ENCODE measurements at regions of chr1 and their contacts with region 1.

Region 1: DNA sequence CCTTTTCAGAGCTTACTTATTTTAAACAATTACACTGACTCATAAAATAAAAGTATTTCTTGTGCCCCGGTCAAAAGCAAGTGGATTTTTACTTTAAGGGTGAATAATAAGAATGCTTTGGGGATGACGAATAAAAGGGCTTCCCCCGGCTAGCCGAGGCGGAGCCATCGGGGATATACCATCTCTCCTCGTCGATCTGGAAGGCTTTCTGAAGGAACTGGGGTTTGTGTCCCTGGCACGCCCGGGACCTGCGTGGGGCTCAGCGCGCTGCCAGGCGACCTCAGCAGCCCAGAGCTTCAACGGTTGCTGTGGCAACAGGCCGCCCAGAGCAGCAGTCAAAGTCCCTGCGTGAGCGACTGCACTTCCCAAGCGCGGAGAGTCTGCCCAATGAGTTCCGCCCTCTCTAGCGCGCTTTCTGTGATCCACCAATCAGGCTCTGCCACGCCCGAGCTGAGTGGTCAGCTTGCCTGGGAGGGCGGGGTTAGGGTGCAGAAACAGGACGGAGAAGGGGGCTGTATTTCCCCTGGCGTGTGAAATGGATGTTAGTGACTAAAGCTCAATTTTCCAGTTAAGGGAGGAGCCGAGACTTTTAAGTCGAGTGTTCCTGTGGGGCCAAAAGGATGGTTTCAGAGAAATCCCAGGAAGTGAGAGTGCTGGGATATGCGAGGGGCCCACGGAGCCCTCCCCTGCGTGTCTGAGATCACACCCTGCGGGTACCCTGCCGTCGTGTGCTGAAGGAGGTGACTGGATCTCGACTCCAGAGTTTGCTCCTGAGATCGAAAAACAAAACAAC is 33.0 kb upstream of the MGST3 start:
- DNase-seq: peak; percentile 99
- ATAC-seq: peak; percentile 99
- H3K4me3 ChIP-seq: peak overlapping the region; percentile 47 to 86
- H3K27ac ChIP-seq: peak overlapping the region; percentile 18 to 79
- H3K4me1 ChIP-seq: peaks cover 0 to 5% of the 10 kb centered on the region in 2 donors
- H3K27me3 ChIP-seq: no peaks in the 10 kb centered on the region

Region 2: GRCh38 chr1:165144757-165145397 is 453.2 kb before region 1 on chr1:
- intact Hi-C with region 1: loop called in 1 of 2 experiments (anchors 10 kb)
- DNase-seq: no peak
- ATAC-seq: peak; percentile 67
- H3K4me3 ChIP-seq: no peak overlapping the region
- H3K27ac ChIP-seq: no peak overlapping the region
- H3K4me1 ChIP-seq: no peaks in the 10 kb centered on the region
- H3K27me3 ChIP-seq: no peaks in the 10 kb centered on the region

Region 3: DNA sequence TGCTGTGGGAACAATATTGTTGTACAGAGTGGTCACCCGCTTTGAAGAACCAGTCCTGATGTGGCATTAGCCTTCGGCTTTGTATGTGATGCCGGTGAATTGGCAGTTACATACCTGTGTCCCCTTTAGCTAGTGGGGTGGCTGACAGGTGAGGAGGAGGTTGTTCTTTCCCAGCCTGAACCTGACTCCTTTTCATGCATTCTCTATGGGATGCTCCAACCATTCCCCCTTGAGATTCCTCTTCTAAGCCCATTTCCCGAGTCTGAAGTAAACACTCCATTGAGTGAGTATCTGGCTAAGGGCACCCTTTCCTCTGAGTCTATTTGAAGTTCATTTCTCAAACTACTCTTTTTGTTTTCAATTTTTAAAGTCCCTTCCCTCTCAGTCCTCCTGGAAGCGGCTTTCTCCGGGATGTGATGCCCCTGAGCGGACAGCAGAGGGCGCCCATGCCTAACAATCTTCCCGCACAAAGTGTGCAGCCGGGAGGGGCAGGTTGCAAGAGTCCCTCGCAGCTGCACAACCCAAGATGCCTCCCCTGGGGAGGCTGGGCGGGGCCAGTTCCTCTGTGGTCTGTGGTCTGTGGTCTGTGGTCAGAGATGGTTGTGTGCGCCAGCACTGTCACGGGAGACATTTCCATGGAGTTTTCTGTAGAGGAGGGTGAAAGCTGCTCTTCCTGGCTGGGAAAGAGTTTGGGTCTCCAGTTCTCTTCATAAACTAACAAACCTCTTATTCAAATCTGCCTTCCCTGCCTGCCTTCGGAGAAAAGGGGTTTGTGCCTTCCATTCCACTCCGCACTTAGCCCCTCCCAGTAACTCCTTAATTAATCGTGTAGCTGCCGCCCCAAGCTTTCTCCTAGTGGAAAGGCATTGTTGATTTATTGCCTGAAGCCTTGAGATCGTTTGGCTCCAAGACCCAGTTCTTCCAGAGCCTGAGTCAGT is 205.2 kb before region 1 on chr1:
- intact Hi-C with region 1: loop called (anchors 1 to 2 kb)
- DNase-seq: peak; percentile 93 to 94
- ATAC-seq: peak; percentile 92
- H3K4me3 ChIP-seq: no peak overlapping the region
- H3K27ac ChIP-seq: no peak overlapping the region
- H3K4me1 ChIP-seq: peaks cover 0 to 3% of the 10 kb centered on the region in 2 donors
- H3K27me3 ChIP-seq: no peaks in the 10 kb centered on the region

Region 4: GRCh38 chr1:165434281-165434680 is 163.8 kb before region 1 on chr1:
- intact Hi-C with region 1: no loop called
- DNase-seq: no peak
- ATAC-seq: no peak
- H3K4me3 ChIP-seq: no peak overlapping the region
- H3K27ac ChIP-seq: no peak overlapping the region
- H3K4me1 ChIP-seq: no peaks in the 10 kb centered on the region
- H3K27me3 ChIP-seq: no peaks in the 10 kb centered on the region

Region 5: DNA sequence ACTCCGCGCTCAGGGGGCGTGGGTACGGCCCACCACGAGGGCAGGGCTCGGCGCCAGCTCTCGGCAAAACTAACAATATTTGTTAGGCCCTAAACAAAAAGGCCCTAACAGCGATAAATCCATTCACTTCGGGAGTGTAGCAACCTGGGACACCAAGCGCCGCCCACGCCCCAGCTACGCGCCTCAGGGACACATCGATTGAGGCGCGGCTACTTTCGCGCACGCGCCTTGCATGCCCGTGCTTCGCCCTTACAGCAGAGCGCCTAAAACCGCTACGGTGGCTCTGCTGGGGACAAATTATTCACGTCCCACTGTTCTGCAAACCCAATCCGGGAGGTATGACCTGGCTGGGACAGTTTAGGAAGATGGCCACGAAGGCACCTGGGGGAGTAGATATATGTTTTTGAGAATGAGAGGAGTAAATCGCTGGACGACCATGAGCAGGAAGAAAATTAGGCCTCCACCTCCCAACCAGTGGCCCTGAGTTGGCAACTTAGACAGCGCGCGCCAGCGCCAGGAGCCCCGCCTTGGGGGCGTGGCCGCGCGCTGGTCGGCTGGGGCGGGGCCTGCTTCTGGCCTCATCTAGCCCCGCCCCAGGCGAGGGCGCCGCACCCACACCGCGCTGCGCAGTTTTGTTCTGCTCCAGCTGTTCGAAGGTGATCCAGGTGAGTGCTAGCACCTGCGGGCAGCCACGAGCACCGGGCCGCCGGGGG is 32.7 kb after region 1 on chr1 and contains the start of gene MGST3:
- intact Hi-C with region 1: loop called in 1 of 2 experiments (anchors 5 kb)
- DNase-seq: peak; percentile 95 to 98
- ATAC-seq: peak; percentile 98
- H3K4me3 ChIP-seq: peak within 1 kb of the TSS; percentile 84 to 93
- H3K27ac ChIP-seq: peak within 1 kb of the TSS; percentile 33 to 92
- H3K4me1 ChIP-seq: no peaks in the 10 kb centered on the region
- H3K27me3 ChIP-seq: no peaks in the 10 kb centered on the region
- total RNA-seq, gene MGST3: 199 to 230 TPM

Region 6: GRCh38 chr1:165697881-165698760 is 100.0 kb after region 1 on chr1 and contains the start of gene ALDH9A1:
- intact Hi-C with region 1: loop called (anchors 5 to 10 kb)
- DNase-seq: peak; percentile 94 to 96
- ATAC-seq: peak; percentile 96
- H3K4me3 ChIP-seq: peak within 1 kb of the TSS; percentile 72 to 91
- H3K27ac ChIP-seq: peak within 1 kb of the TSS; percentile 72 to 73
- H3K4me1 ChIP-seq: no peaks in the 10 kb centered on the region
- H3K27me3 ChIP-seq: no peaks in the 10 kb centered on the region
- total RNA-seq, gene ALDH9A1: 36.5 to 54.3 TPM

Region 7: GRCh38 chr1:165768513-165769394 is 170.7 kb after region 1 on chr1 and contains the start of gene TMCO1:
- intact Hi-C with region 1: loop called in 1 of 2 experiments (anchors 5 kb)
- DNase-seq: peak; percentile 97
- ATAC-seq: peak; percentile 98
- H3K4me3 ChIP-seq: peak within 1 kb of the TSS; percentile 84 to 88
- H3K27ac ChIP-seq: peak within 1 kb of the TSS; percentile 25 to 76
- H3K4me1 ChIP-seq: peaks cover 0 to 3% of the 10 kb centered on the region in 2 donors
- H3K27me3 ChIP-seq: no peaks in the 10 kb centered on the region
- total RNA-seq, gene TMCO1: 56.8 to 61.8 TPM

Region 8: GRCh38 chr1:165914136-165914798 is 316.2 kb after region 1 on chr1:
- intact Hi-C with region 1: loop called (anchors 2 kb)
- DNase-seq: no peak
- ATAC-seq: peak; percentile 78
- H3K4me3 ChIP-seq: no peak overlapping the region
- H3K27ac ChIP-seq: no peak overlapping the region
- H3K4me1 ChIP-seq: no peaks in the 10 kb centered on the region
- H3K27me3 ChIP-seq: no peaks in the 10 kb centered on the region